ENCODE measurements at regions of chr10 and their contacts with region 1.

Region 1: DNA sequence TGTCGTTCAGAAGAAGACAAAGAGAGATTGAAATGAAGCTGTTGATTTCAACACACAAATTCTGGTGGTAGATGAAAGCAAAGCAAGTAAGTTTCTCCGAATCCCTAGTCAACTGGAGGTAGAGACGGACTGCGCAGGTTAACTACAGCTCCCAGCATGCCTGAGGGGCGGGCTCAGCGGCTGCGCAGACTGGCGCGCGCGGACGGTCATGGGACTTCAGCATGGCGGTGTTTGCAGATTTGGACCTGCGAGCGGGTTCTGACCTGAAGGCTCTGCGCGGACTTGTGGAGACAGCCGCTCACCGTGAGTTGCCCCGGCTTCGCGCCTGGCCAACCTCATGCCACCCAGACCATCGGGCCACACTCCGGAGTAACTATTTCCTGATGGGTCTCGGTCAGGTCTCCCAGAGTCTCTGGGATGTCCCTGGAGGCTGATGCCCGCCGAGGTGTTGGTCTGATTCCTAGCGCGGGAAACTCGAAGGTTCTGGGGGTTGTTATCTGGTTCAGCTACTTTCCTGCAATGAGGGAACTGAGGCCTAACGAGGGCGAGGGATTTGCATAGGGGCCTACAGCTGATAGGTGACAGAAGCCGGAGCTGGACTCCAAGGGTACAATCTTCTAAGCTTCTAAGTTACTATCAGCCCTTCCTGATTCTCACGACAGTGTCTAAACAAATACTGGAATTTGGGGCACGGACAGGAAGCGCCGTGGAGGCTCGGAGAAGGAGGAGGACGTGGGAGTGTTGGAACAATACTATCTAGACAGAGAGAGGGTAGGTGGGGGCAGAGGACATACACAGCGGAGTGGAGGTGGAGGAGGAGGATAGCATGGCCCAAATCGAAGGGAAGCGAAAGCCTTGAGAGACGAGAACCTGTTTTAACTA is at the start of gene RPP30:
- DNase-seq: peak; percentile 91
- H3K4me3 Mint-ChIP-seq: peak within 1 kb of the TSS; percentile 93
- H3K27ac Mint-ChIP-seq: peak within 1 kb of the TSS; percentile 98
- H3K4me1 Mint-ChIP-seq: peaks cover 31% of the 10 kb centered on the region
- H3K27me3 Mint-ChIP-seq: peaks cover 24% of the 10 kb centered on the region
- total RNA-seq, gene RPP30: 103 to 108 TPM

Region 2: GRCh38 chr10:89251409-89252224 is 1620.4 kb before region 1 on chr10 and contains the start of gene LIPA:
- CTCF ChIA-PET with region 1: no interaction called
- POLR2A ChIA-PET with region 1: no interaction called
- intact Hi-C with region 1: loop called (anchors 10 kb)
- DNase-seq: peak; percentile 96
- H3K4me3 Mint-ChIP-seq: peak within 1 kb of the TSS; percentile 83
- H3K27ac Mint-ChIP-seq: peak within 1 kb of the TSS; percentile 46
- H3K4me1 Mint-ChIP-seq: peaks cover 30% of the 10 kb centered on the region
- H3K27me3 Mint-ChIP-seq: no peaks in the 10 kb centered on the region
- total RNA-seq, gene LIPA: 22.7 to 23.8 TPM

Region 3: DNA sequence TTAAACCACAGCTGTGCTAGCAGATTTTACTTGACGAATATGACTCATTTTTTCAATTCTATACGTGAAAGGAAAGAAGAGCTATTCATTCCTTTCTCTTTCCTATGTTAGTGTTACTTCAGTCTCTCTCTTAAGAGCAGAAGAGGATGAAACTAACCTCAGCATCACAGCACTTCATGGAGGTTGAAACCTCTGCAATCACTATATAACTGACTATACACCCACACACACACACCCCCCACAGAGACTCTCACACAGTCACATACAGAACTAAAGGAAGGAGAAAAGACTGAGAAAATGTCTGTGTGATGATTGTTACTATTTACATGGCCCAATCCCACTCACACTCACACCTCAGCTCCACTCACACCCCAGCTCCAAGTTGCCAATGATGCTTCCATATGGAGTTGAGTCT is 1066.4 kb before region 1 on chr10:
- CTCF ChIA-PET with region 1: no interaction called
- POLR2A ChIA-PET with region 1: interaction called, 4 read pairs
- intact Hi-C with region 1: loop called (anchors 1 kb)
- DNase-seq: peak; percentile 84
- H3K4me3 Mint-ChIP-seq: no peak overlapping the region
- H3K27ac Mint-ChIP-seq: peak overlapping the region; percentile 4
- H3K4me1 Mint-ChIP-seq: peaks cover 19% of the 10 kb centered on the region
- H3K27me3 Mint-ChIP-seq: peaks cover 35% of the 10 kb centered on the region

Region 4: DNA sequence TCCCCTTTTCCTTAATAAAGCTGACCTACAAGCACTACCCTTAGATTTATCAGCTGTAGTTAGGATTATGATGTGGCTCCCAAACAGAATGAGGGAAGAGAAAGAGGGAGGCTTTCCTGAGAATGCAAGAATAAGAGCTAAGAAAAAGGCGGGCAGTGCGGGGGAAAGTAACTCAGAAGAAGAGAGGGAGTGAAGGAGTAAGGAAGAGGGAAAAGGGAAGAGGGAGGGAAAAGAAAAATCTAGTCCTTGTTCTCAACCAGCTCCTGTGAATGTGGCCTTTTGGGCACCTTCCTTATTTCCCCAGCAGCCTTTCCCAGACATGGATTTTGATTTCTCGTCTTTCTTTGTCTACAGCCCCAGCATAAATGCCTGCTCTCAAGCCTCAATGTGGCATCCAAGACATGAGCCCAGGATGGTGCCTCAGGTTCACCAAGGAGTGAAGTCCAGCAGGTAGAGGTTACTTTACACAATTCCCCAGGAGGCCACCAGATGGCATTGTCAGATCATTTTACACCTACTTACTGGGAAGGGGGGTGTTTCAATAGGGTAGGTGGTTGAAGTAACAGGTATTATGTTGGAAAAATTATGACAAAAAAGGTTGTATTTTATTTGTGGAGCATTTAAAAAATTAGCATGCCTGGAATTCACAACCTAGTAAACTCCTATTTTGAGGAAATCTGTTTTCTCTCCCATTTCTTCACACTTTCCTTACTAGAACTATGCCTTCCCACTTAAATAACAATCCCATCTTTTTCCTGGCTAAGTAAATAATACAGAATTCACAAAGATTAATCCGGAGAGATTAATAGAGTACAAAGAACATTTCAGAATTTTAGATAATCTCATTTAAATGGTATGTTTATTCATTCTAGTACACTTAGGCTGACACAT is 120.7 kb before region 1 on chr10:
- CTCF ChIA-PET with region 1: interaction called, 14 read pairs
- POLR2A ChIA-PET with region 1: no interaction called
- intact Hi-C with region 1: loop called (anchors 1 kb)
- DNase-seq: peak; percentile 58
- H3K4me3 Mint-ChIP-seq: no peak overlapping the region
- H3K27ac Mint-ChIP-seq: no peak overlapping the region
- H3K4me1 Mint-ChIP-seq: no peaks in the 10 kb centered on the region
- H3K27me3 Mint-ChIP-seq: peaks cover 33% of the 10 kb centered on the region

Region 5: DNA sequence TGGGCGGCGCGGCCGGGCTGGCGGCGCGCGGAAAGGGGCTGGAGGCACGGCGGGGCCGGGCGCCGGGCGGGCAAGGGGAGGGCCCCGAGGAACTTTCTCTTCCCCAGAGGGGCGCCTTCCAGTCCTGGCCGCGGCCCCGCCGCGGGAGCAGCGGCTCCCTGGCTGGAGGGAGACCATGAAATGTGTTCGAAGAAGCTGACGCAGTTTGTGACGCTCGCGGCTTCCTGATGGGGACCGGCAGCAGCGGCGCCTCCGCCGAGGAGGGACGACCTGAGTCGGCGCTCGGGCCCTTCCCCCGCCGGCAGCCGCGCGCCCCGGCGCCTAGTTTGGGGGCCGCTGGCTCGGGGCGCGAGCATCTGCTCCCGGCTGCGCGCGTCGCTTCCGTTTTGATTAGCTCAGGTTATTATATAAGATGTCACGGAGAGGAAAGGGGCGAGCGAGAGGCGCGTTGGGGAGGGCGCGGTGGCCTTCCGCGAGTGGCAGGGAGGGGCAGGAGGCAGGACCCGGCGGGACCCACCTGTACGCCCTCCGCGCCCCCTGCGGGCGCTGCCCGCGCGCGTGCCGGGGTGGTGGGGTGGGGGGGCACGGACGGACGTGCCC is 291.4 kb after region 1 on chr10:
- CTCF ChIA-PET with region 1: no interaction called
- POLR2A ChIA-PET with region 1: interaction called, 4 read pairs
- intact Hi-C with region 1: loop called (anchors 2 kb)
- DNase-seq: peak; percentile 79
- H3K4me3 Mint-ChIP-seq: peak overlapping the region; percentile 82
- H3K27ac Mint-ChIP-seq: peak overlapping the region; percentile 87
- H3K4me1 Mint-ChIP-seq: peaks cover 47% of the 10 kb centered on the region
- H3K27me3 Mint-ChIP-seq: no peaks in the 10 kb centered on the region

Region 6: DNA sequence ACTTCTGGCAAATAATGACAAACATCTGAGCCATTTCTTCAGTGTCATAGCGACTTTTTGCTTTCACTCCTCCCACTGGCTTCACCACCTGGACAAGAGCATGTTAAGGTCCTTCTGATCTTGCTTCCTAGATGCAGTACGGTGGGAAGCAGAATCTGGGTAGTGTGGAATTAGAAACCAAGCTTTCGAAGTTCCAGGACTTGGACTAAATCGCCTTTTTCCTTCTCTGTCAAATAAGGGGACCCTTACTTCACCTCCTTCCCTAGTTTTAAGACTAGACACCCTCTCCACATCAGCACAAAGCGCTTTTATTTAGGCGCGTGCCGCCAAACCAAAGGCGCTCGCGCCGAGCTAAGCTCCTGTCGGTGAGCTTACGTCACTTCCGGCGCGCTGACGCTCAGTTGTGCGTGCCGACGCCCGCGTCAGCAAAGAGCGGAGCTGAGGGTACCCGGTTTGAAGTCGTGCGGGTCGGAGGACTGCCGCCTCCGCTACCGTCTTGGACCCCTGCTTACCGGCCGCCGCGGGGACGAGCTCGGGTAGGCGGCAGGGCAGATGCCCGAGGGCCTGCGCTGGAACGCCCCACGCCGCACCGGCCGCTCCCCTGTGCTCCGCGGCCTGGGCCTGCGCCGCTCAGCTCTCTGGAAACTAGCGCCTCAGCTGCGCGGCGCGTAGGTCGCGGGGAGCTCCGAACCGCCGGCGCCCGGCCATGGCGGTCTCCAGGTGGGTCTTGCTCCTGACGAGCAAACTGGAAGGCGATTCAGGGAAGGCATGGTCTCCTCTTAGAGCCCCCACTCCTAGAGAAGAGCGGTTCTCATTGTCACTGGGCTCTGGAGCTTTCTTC is 1051.6 kb after region 1 on chr10 and contains the start of gene BTAF1:
- CTCF ChIA-PET with region 1: no interaction called
- POLR2A ChIA-PET with region 1: interaction called, 4 read pairs
- intact Hi-C with region 1: loop called (anchors 5 kb)
- DNase-seq: peak; percentile 94
- H3K4me3 Mint-ChIP-seq: peak within 1 kb of the TSS; percentile 88
- H3K27ac Mint-ChIP-seq: peak within 1 kb of the TSS; percentile 97
- H3K4me1 Mint-ChIP-seq: peaks cover 37% of the 10 kb centered on the region
- H3K27me3 Mint-ChIP-seq: peaks cover 1% of the 10 kb centered on the region
- total RNA-seq, gene BTAF1: 49.9 to 50.7 TPM

Measured in activated CD4-positive, alpha-beta memory T cell treated with anti-CD3 and anti-CD28 coated beads for 36 hours (primary cell).